Activated CD4-positive, alpha-beta memory T cell treated with anti-CD3 and anti-CD28 coated beads for 36 hours (primary cell): ENCODE measurements at regions of chrX and their contacts with region 1.

Region 1: DNA sequence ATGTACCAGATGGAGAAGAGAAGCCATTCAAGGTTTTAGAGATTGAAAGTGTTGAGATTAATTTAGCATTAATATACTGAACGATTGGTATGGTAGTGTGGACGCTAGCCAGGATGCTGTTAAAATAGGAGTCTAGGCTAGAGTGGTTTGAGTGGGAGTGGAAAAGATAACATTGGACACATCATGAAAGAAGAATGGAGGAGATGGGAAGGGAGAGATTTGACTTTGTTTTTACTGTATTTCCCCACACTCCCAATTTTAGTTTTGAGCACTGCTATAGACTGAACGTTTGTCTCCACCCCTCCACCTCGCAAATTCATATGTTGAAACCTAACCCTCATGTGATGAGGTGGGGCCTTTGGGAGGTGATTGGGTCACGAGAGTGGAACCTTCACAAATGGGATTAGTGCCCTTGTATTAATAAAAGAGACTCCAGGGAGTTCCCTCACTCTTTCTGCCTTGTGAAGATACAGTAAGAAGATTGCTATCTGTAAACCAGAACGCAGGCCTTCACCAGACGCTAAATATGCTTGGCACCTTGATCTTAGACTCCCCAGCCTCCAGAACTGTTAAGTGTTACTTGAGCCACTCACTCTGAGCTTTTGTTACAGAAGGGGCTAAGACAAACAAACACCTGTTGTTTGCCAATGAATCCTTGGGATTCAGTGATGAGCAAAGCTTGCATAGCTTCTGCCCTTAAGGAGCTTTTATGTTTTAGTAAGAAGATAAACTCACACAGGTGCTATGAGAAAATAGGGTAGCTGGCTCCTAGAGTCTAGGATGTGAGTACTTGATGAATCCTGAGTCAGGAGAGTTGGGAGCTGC is 25.8 kb downstream of the USP9X start:
- DNase-seq: no peak
- H3K4me3 Mint-ChIP-seq: no peak overlapping the region
- H3K27ac Mint-ChIP-seq: peak overlapping the region; percentile 9
- H3K4me1 Mint-ChIP-seq: peaks cover 64% of the 10 kb centered on the region
- H3K27me3 Mint-ChIP-seq: no peaks in the 10 kb centered on the region

Region 2: DNA sequence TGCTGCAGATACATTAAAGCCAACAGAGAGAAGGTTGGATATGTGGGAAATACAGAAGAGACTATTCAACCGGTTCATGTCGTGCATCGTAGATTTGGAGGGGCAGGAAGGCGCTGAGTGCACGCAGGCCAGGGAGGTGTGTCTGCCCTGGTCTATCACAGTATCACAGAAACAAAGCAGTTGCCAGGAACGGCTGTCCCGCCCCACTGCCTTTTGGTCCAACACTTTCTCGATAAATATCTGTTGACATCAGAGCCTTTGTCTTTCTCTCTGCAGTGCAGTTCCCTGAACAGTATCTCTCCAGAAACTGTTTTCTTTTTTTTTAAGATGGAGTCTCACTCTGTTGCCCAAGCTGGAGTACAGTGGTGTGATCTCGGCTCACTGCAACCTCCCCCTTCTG is 862.2 kb before region 1 on chrX:
- CTCF ChIA-PET with region 1: no interaction called
- POLR2A ChIA-PET with region 1: no interaction called
- intact Hi-C with region 1: no loop called
- DNase-seq: no peak
- H3K4me3 Mint-ChIP-seq: no peak overlapping the region
- H3K27ac Mint-ChIP-seq: no peak overlapping the region
- H3K4me1 Mint-ChIP-seq: peaks cover 10% of the 10 kb centered on the region
- H3K27me3 Mint-ChIP-seq: no peaks in the 10 kb centered on the region

Region 3: GRCh38 chrX:40877887-40878286 is 233.1 kb before region 1 on chrX:
- CTCF ChIA-PET with region 1: interaction called, 36 read pairs
- POLR2A ChIA-PET with region 1: no interaction called
- intact Hi-C with region 1: loop called (anchors 1 kb)
- DNase-seq: no peak
- H3K4me3 Mint-ChIP-seq: no peak overlapping the region
- H3K27ac Mint-ChIP-seq: no peak overlapping the region
- H3K4me1 Mint-ChIP-seq: peaks cover 3% of the 10 kb centered on the region
- H3K27me3 Mint-ChIP-seq: no peaks in the 10 kb centered on the region